ENCODE measurements at regions of chr3 and their contacts with region 1.

Region 1: DNA sequence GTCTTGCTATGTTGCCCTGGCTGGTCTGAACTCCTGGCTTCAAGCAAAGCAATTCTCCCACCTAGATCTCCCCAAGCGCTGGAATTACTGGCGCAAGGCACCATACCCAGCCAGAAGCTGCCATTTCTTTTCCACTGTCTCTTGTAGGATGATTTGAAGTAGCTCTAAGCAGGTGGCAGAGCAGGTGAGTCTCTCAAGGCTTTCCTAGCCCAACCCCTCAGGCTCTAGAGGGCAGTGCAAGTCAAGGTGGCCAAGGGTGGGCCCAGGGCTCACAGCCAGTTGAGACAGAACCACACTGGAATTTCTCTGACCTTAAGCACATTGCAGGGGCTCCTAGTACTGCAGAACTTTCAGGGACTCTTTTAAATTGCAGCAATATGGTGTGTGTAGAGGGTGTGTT is 15.6 kb upstream of the DAG1 start:
- DNase-seq: no peak
- H3K4me3 Mint-ChIP-seq: no peak overlapping the region
- H3K27ac Mint-ChIP-seq: no peak overlapping the region
- H3K4me1 Mint-ChIP-seq: no peaks in the 10 kb centered on the region
- H3K27me3 Mint-ChIP-seq: no peaks in the 10 kb centered on the region

Region 2: GRCh38 chr3:49171119-49171774 is 283.2 kb before region 1 on chr3 and contains the start of gene KLHDC8B:
- intact Hi-C with region 1: loop called (anchors 1 kb)
- DNase-seq: peak; percentile 95
- H3K4me3 Mint-ChIP-seq: peak within 1 kb of the TSS; percentile 85
- H3K27ac Mint-ChIP-seq: peak within 1 kb of the TSS; percentile 52
- H3K4me1 Mint-ChIP-seq: peaks cover 11% of the 10 kb centered on the region
- H3K27me3 Mint-ChIP-seq: no peaks in the 10 kb centered on the region
- total RNA-seq, gene KLHDC8B: 1.5 and 2.3 TPM in 2 replicates

Region 3: DNA sequence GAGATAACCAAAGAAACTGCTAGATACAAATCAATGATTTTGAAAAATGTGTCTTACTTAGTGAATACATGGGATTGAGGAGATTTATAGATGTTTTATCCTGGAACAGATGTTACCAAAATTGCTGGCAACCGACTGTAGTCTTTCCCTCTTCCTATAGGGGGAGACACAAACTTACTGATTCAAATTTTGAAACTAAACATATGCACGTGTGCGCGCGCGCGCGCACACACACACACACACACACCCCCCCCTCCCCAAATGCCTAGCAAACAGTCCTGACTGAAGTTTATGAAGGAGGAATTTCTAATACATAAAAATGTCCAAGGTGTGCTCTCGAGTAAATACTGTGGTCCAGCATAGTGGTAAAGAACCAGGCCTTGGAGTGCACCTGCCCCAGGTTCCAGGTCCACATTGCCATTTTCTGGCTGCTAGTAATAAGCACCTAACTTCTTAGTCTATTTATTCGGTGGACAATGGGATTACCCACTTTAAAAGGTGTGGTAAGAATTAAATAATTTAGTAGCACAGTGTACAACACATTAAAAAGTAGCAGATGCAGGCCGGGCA is 158.9 kb before region 1 on chr3:
- intact Hi-C with region 1: loop called (anchors 1 kb)
- DNase-seq: peak; percentile 78
- H3K4me3 Mint-ChIP-seq: no peak overlapping the region
- H3K27ac Mint-ChIP-seq: peak overlapping the region; percentile 15
- H3K4me1 Mint-ChIP-seq: no peaks in the 10 kb centered on the region
- H3K27me3 Mint-ChIP-seq: no peaks in the 10 kb centered on the region

Region 4: GRCh38 chr3:49428697-49429100 is 25.8 kb before region 1 on chr3:
- intact Hi-C with region 1: loop called (anchors 2 kb)
- DNase-seq: no peak
- H3K4me3 Mint-ChIP-seq: peak overlapping the region; percentile 93
- H3K27ac Mint-ChIP-seq: peak overlapping the region; percentile 94
- H3K4me1 Mint-ChIP-seq: peaks cover 8% of the 10 kb centered on the region
- H3K27me3 Mint-ChIP-seq: no peaks in the 10 kb centered on the region

Region 5: DNA sequence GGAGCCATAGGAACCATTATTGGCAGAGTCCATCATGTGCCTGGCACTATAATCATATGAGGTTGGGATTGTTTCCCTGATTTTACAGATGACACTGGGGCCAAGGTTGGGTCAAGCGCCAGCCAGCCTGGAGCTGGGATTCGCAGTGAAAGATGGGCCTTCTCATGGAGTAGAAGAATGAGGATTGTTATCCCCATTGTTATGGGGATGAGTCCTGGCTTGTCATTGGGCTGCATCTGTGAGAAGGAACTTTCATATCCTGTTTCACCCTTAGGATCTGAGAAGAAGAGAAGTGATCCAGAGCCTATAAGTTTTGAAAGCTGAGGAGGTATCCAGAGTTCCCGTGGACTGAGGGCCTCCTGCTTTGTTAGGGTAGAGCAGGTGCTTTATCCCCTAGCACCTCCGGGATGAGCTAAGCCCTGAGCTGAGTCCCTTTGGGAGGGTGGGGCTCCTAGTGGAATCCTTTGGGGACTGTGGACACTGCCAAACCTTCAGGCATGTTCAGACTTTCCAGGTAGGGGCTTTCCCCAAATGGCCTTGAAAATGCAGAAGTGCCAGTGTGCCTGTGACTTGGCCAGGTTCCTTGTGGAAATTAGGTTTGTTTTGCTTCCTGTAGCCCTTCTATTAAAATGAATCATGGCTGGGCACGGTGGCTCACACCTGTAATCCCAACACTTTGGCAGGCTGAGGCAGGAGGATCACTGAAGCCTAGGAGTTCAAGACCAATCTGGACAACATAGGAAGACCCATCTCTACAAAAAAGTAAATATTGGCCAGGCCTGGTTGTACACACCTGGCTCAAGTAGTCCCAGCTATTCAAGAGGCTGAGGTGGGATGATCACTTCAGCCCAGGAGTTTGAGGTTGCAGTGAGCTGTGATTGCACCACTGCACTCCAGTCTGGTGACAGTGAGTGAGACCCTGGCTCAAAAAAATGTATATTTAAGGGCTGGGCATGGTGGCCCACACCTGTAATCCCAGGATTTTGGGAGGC is 69.6 kb after region 1 on chr3:
- intact Hi-C with region 1: no loop called
- DNase-seq: no peak
- H3K4me3 Mint-ChIP-seq: no peak overlapping the region
- H3K27ac Mint-ChIP-seq: no peak overlapping the region
- H3K4me1 Mint-ChIP-seq: peaks cover 6% of the 10 kb centered on the region
- H3K27me3 Mint-ChIP-seq: no peaks in the 10 kb centered on the region

Region 6: DNA sequence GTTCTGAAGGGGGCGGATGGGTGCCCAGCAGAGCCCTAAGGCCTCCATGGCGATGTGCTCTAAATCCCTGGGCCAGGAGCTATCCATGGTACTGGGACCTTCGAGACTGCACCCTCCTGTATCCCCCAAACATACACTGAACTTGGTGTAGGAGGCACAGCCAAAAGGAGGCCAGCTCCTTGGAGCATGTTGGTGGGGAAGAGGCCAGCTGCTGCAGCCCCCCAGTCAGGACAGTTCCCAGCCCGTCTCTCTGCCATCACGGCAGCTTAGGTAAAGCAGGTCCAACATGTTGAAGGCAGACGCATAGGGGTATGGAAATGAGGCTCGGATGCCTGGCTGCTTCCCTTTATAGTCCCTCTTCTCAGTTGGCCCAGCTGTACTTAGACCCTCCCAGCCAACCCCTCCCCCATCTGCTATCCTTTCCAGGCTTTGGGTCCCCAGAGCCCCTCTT is 413.4 kb after region 1 on chr3:
- intact Hi-C with region 1: no loop called
- DNase-seq: peak; percentile 76
- H3K4me3 Mint-ChIP-seq: peak overlapping the region; percentile 17
- H3K27ac Mint-ChIP-seq: no peak overlapping the region
- H3K4me1 Mint-ChIP-seq: no peaks in the 10 kb centered on the region
- H3K27me3 Mint-ChIP-seq: peaks cover 53% of the 10 kb centered on the region